ENCODE measurements at regions of chr3 and their contacts with region 1.

Region 1: GRCh38 chr3:128426128-128426921 is 40.4 kb downstream of the DNAJB8 start:
- DNase-seq: peak; percentile 52
- H3K4me3 Mint-ChIP-seq: no peak overlapping the region
- H3K27ac Mint-ChIP-seq: no peak overlapping the region
- H3K4me1 Mint-ChIP-seq: no peaks in the 10 kb centered on the region
- H3K27me3 Mint-ChIP-seq: peaks cover 18% of the 10 kb centered on the region

Region 2: DNA sequence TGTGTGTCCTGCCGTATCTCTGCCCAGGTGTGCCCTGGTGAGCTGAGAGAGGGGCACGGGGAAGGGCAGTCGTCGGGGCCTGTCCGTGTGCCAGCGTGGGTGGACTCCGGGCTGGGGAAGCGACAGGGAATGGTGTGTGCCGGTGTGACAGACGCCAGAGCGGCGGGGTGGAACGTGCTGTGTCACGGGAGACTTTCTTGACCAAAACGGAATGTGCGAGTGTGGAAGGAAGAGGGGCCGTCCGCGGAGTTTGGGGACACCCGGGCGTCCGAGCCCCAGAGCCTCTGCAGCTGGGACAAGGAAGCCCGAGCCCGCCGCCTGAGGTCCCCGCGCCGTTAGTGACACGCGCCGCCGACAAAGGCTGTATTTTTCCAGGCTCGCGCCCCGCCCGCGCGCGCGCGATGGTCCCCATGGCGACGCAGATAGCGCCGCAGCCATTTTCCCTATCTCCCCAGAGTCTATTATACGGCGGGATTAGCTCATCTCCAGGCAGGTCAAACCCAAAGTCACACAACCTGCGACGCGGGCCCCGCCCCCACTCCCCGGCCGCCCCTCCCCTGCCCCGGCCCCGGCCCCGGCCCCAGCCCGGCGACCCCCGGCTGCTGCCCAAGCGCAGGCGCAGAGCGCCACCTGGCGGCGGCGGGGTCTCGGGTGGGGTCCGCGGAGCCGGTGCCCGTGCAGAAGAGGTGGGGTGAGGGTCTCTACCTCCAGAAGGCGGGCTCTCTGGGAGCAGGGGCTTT is 71.2 kb after region 1 on chr3:
- intact Hi-C with region 1: loop called (anchors 1 kb)
- DNase-seq: peak; percentile 61
- H3K4me3 Mint-ChIP-seq: peak overlapping the region; percentile 71
- H3K27ac Mint-ChIP-seq: no peak overlapping the region
- H3K4me1 Mint-ChIP-seq: peaks cover 8% of the 10 kb centered on the region
- H3K27me3 Mint-ChIP-seq: peaks cover 59% of the 10 kb centered on the region

Measured in activated T-helper 2 cell treated with anti-CD3 and anti-CD28 coated beads, Interferon-gamma antibody, Interleukin-2, Interleukin-4, amounts not matched to agents 10 μg/mL and 5 μg/mL and 100 μg/mL, durations not matched to agents 14 hours and 24 hours and 36 hours (primary cell).